Endothelial cell of umbilical vein (primary cell): ENCODE measurements at regions of chr15 and their contacts with region 1.

Region 1: GRCh38 chr15:28935326-28935725 is 49.6 kb downstream of the APBA2 start:
- DNase-seq: no peak
- H3K4me3 ChIP-seq: no peak overlapping the region
- H3K27ac ChIP-seq: no peak overlapping the region
- H3K4me1 ChIP-seq: no peaks in the 10 kb centered on the region
- H3K27me3 ChIP-seq: no peaks in the 10 kb centered on the region
- CTCF ChIP-seq: peak in 1 of 2 donors; percentile 18
- POLR2A ChIP-seq: no peak

Region 2: GRCh38 chr15:28901987-28902745 is 33.2 kb before region 1 on chr15:
- CTCF ChIA-PET with region 1: no interaction called
- POLR2A ChIA-PET with region 1: no interaction called
- dilution Hi-C with region 1: no loop called
- intact Hi-C with region 1: loop called (anchors 5 kb)
- DNase-seq: no peak
- H3K4me3 ChIP-seq: no peak overlapping the region
- H3K27ac ChIP-seq: no peak overlapping the region
- H3K4me1 ChIP-seq: no peaks in the 10 kb centered on the region
- H3K27me3 ChIP-seq: no peaks in the 10 kb centered on the region
- CTCF ChIP-seq: no peak
- POLR2A ChIP-seq: no peak